ENCODE measurements at regions of chr16 and their contacts with region 1.

Region 1: DNA sequence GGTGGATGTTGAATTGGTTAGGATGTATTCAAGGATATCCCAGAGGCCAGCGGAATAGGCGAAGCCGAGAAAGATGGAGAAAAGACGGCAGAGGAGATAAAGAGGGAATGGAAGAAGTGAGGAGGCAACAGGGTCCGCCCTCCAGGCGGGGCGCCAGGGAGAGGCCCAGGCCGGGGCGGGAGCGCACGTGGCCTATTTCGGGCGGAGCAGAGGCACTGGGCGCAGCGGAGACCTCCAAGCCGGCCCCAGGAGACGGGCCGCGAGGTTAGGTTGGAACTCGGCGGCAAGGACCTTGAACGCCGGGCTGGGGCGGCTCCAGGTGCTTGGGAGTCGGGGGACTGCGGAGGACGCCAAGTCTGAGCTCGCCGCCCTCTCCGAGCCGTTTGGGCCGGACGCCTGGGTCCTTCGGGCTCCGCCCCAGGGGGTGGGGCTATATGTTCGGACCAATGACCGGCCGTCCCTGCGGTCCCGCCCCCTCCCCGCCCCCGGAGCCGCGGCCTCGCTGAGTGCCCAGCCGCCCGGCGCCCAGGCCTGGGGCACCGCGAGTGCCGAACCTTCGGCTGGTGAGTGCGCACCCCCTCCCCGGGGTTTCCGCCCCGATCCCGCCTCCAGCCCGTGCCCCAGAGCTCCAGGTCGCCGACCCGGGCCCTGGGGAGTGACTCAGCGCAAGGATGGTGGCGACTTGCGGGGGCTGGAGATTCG is at the start of gene ZNF771:
- DNase-seq: peak; percentile 92 to 96 (median 94)
- ATAC-seq: peak; percentile 93
- H3K4me3 ChIP-seq: peak within 1 kb of the TSS; percentile 80
- H3K27ac ChIP-seq: peak within 1 kb of the TSS; percentile 81
- H3K4me1 ChIP-seq: peaks cover 15 to 28% of the 10 kb centered on the region in 2 experiments; a peak in 4 of 5 replicates
- H3K27me3 ChIP-seq: no peaks in the 10 kb centered on the region
- CTCF ChIP-seq: peak in 2 of 3 experiments; percentile 17 to 23; a peak in 1 of 6 replicates
- EP300 ChIP-seq: no peak
- POLR2A ChIP-seq: peak; percentile 93
- RAD21 ChIP-seq: no peak
- polyA plus RNA-seq, gene ZNF771: 1.5 to 1.7 TPM

Region 2: DNA sequence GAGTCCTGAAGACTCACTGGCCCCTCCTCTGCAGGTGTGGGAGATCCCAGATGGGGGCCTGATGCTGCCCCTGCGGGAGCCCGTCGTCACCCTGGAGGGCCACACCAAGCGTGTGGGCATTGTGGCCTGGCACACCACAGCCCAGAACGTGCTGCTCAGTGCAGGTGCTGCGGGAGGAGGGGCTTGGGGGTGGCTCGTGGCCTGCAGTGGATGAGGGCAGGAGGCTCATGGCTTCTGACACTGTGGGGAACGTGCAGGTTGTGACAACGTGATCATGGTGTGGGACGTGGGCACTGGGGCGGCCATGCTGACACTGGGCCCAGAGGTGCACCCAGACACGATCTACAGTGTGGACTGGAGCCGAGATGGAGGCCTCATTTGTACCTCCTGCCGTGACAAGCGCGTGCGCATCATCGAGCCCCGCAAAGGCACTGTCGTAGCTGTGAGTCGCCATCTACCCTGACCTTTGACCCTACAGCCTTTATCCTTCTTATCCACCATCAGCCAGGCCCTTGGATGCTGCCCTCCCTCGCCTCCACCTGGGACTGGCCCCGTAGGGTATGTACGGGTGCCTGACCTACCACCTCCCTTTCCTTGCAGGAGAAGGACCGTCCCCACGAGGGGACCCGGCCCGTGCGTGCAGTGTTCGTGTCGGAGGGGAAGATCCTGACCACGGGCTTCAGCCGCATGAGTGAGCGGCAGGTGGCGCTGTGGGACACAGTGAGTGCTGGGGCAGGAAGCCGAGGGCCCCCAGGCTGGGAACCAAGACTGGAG is 220.3 kb before region 1 on chr16:
- CTCF ChIA-PET with region 1: no interaction called
- POLR2A ChIA-PET with region 1: no interaction called
- in situ Hi-C with region 1: loop called (anchors 10 kb)
- intact Hi-C with region 1: no loop called
- DNase-seq: peak; percentile 66 to 88 (median 73)
- ATAC-seq: peak; percentile 85
- H3K4me3 ChIP-seq: no peak overlapping the region
- H3K27ac ChIP-seq: no peak overlapping the region
- H3K4me1 ChIP-seq: peaks cover 32 to 58% of the 10 kb centered on the region in 2 experiments
- H3K27me3 ChIP-seq: no peaks in the 10 kb centered on the region
- CTCF ChIP-seq: peak; percentile 84 to 96 (median 87)
- EP300 ChIP-seq: no peak
- POLR2A ChIP-seq: peak; percentile 45; the same call in 1 of the 2 replicates
- RAD21 ChIP-seq: peak; percentile 26 to 72

Region 3: DNA sequence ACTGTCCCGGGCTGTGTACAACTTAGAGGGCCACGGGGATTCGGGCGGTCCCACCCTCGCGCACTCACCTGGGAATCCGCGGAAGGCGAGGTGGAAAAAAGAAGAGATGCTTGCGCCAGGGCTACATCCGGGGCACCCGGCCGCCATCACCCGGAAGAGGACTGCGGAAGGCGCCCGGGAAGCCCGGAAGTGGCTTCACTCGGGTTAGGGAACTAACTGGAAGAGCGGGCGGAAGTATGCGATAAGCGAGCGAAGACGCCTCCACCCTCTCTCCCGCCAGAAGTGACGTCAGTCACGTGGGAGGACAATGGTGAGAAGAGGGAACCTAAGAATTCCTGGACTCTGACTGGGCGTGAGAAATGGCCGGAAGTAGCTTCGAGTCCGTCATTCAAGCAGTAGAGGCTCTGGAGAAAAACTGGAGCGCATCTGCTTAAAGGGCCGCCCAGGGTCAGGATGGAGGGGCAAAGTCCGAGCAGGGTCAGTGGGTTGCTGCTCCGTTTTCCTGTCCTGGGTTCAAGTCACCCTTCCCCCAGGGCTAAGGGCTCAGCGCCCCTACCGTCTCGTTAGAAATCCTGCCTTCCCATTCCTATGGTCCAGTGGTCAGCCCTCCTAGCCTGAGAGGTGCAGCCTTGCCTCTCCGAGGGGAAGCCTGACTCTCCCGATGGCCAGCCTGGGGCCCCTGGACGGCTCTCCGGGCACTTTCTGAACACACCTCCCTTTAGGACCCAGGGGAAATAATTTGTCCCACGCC is 51.9 kb before region 1 on chr16 and contains the start of gene CD2BP2:
- CTCF ChIA-PET with region 1: no interaction called
- POLR2A ChIA-PET with region 1: interaction called, 9 read pairs
- in situ Hi-C with region 1: no loop called
- intact Hi-C with region 1: loop called (anchors 5 kb)
- DNase-seq: peak; percentile 93 to 99 (median 94)
- ATAC-seq: peak; percentile 90
- H3K4me3 ChIP-seq: peak within 1 kb of the TSS; percentile 94
- H3K27ac ChIP-seq: peak within 1 kb of the TSS; percentile 99
- H3K4me1 ChIP-seq: peaks cover 13 to 53% of the 10 kb centered on the region in 2 experiments; a peak in 4 of 5 replicates
- H3K27me3 ChIP-seq: no peaks in the 10 kb centered on the region
- CTCF ChIP-seq: peak in 1 of 3 experiments; percentile 1; a peak in 1 of 6 replicates
- EP300 ChIP-seq: peak; percentile 34; the same call in 1 of the 2 replicates
- POLR2A ChIP-seq: peak; percentile 82
- RAD21 ChIP-seq: peak in 1 of 2 experiments; percentile 20; a peak in 1 of 4 replicates
- polyA plus RNA-seq, gene CD2BP2: 3.9 to 5.0 TPM

Region 4: GRCh38 chr16:30370444-30371247 is 36.6 kb before region 1 on chr16 and contains the start of gene TBC1D10B:
- CTCF ChIA-PET with region 1: no interaction called
- POLR2A ChIA-PET with region 1: interaction called, 4 read pairs
- in situ Hi-C with region 1: no loop called
- intact Hi-C with region 1: loop called (anchors 5 kb)
- DNase-seq: peak; percentile 92 to 99 (median 96)
- ATAC-seq: peak; percentile 93
- H3K4me3 ChIP-seq: peak within 1 kb of the TSS; percentile 74
- H3K27ac ChIP-seq: peak within 1 kb of the TSS; percentile 74
- H3K4me1 ChIP-seq: peaks cover 25 to 44% of the 10 kb centered on the region in 2 experiments; a peak in 4 of 5 replicates
- H3K27me3 ChIP-seq: no peaks in the 10 kb centered on the region
- CTCF ChIP-seq: peak; percentile 29 to 47 (median 44); a peak in 4 of 6 replicates
- EP300 ChIP-seq: no peak
- POLR2A ChIP-seq: no peak
- RAD21 ChIP-seq: no peak
- polyA plus RNA-seq, gene TBC1D10B: 2.2 to 2.3 TPM

Measured in K562 (cell line).